ENCODE measurements at regions of chr13 and their contacts with region 1.

Region 1: DNA sequence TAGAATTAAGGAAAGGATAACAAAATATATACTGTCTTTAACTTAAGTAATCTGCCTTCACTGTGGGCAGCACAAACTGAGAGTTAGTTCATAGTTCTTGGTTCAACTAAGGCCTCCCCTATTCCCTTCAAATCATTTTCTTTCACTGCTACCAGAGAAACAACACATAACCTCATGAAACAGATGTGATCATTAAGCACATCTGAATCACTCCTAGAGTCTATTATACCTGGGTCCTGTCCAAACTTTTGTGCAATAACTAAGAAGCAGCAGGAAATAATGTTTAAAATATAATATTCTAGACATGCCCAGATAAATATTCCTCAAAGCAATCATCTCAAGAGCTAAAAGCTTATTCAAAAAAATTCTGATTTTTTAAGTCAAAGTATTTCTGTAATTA is 62.9 kb downstream of the ZC3H13 start:
- DNase-seq: no peak
- ATAC-seq: peak in 2 of 4 donors; percentile 46 to 73
- H3K4me3 ChIP-seq: no peak overlapping the region
- H3K27ac ChIP-seq: no peak overlapping the region
- H3K4me1 ChIP-seq: peaks cover 0 to 14% (median 0%) of the 10 kb centered on the region in 12 donors
- H3K27me3 ChIP-seq: no peaks in the 10 kb centered on the region
- CTCF ChIP-seq: no peak
- POLR2A ChIP-seq: no peak

Region 2: GRCh38 chr13:45950386-45951000 is 39.1 kb before region 1 on chr13:
- intact Hi-C with region 1: loop called in 1 of 10 experiments (anchors 5 kb)
- DNase-seq: no peak
- ATAC-seq: peak; percentile 24 to 73 (median 46)
- H3K4me3 ChIP-seq: no peak overlapping the region
- H3K27ac ChIP-seq: peak overlapping the region in 4 of 12 donors; percentile 11 to 89 (median 24)
- H3K4me1 ChIP-seq: peaks cover 0 to 17% (median 0%) of the 10 kb centered on the region in 12 donors
- H3K27me3 ChIP-seq: no peaks in the 10 kb centered on the region
- CTCF ChIP-seq: no peak
- POLR2A ChIP-seq: no peak